Esophagus squamous epithelium (tissue), 5 donors: ENCODE measurements at regions of chr1 and their contacts with region 1.

Region 1: DNA sequence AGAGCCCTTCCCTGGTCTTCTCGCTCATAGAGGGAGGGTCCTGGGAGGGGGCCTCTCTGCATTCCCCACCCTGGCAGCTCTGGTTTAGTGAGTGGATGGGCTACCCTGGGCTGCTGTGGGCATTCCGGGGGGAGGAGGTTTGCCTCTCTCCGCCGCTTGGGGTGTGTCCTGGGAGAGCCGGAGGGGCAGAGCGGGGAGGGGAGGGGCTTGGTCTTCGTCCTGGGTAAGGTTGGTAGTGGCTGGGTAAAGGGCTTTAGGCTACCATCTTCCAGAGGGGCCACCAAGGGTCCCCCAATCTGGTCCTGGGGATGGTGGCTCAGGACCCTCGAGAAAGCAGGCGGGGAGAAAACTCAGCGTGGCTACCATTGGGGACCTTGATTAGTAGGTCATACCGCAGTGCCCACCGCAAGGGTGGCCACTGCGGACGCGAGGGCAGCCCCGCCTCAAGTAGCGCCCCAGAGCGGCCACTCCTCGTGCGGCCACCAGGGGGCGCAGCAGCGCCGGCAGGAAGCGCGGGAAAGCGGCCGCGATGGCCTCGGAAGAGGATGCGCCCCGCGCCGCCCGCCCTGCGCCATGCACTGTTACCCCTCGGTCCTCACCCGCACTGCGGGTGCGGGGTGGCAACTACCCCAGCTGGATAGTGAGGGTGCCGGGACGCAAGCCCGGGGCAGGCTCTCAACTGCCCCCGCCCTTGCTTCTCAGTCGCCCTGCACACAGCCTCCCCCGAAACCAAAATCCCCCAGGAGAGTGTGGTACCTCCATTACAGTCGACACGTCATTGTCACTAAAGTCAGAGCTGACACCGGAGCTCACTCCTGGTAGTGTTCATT is 44.1 kb upstream of the SLC25A33 start:
- DNase-seq: no peak
- H3K4me3 ChIP-seq: peak overlapping the region in 3 of 4 donors; percentile 19 to 57 (median 27)
- H3K27ac ChIP-seq: no peak overlapping the region
- H3K4me1 ChIP-seq: peaks cover 7 to 17% (median 12%) of the 10 kb centered on the region in 3 donors
- H3K27me3 ChIP-seq: peaks cover 0 to 14% (median 0%) of the 10 kb centered on the region in 4 donors
- CTCF ChIP-seq: peak; percentile 95 to 100 (median 98)
- POLR2A ChIP-seq: no peak

Region 2: DNA sequence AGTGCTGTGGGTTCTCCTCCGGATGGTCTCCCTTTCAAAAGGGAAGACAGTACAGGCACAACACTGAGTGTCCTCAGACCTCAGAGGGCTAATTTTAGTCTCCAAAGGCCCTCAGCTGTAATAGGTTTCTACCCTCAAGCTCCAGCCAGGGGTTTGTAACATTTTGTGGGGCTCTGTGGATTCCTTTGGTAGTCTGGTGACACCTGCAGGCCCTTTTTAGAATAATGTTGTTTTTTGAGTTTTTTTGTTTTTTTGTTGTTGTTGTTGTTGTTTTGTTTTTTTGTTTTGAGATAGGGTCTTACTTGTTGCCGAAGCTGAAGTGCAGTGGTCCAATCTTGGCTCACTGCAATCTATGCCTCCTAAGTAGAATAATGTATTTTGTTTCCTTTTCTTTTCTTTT is 78.6 kb after region 1 on chr1:
- intact Hi-C with region 1: loop called (anchors 5 kb)
- DNase-seq: no peak
- H3K4me3 ChIP-seq: no peak overlapping the region
- H3K27ac ChIP-seq: no peak overlapping the region
- H3K4me1 ChIP-seq: no peaks in the 10 kb centered on the region
- H3K27me3 ChIP-seq: no peaks in the 10 kb centered on the region
- CTCF ChIP-seq: peak in 4 of 6 experiments; percentile 9 to 42 (median 23)
- POLR2A ChIP-seq: no peak